Upper lobe of right lung (tissue), 1 donor: ENCODE measurements at regions of chr2 and their contacts with region 1.

Region 1: DNA sequence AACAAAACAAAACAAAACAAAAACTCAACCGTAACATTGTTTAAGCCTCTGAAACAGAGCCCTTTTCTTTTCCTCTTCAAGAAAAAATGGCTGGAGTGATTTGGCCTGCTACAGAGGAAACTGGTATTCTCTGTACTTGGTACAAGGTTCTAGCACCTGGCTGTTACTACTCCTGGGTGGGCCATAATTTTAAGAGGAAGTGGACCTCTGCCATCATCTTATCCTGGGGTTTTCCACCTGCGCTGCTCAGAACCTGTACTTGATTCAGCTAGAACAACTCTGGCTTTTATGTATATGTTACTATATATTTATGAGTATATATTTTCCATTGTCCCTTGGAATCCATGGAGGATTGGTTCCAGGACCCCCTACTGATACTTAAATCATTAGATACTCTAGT is 22.5 kb downstream of the SRSF7 start:
- DNase-seq: no peak
- ATAC-seq: no peak
- H3K4me3 ChIP-seq: no peak overlapping the region
- H3K27ac ChIP-seq: no peak overlapping the region
- H3K4me1 ChIP-seq: no peaks in the 10 kb centered on the region
- H3K27me3 ChIP-seq: no peaks in the 10 kb centered on the region
- CTCF ChIP-seq: no peak

Region 2: GRCh38 chr2:38164881-38165280 is 563.8 kb before region 1 on chr2:
- intact Hi-C with region 1: no loop called
- DNase-seq: no peak
- ATAC-seq: no peak
- H3K4me3 ChIP-seq: no peak overlapping the region
- H3K27ac ChIP-seq: no peak overlapping the region
- H3K4me1 ChIP-seq: peaks cover 21% of the 10 kb centered on the region
- H3K27me3 ChIP-seq: no peaks in the 10 kb centered on the region
- CTCF ChIP-seq: no peak

Region 3: DNA sequence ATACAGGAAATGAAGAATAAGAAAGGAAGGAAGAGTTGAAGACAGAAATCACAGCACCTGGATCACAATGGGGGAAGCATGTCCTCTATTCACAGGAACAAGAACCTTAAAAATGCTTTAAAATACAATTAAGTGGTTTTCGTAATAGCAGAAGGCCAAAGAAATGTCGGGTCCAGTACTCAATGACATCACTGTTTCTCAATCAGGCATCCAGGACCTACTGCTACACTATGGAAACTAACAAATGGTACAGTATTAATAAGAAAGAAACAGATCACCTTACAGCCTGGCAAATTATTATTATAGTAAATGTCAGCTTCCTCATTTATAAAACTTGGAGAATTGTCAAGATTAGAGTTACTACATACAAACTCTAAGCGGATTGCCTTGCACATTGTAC is 141.8 kb before region 1 on chr2:
- intact Hi-C with region 1: loop called (anchors 5 kb)
- DNase-seq: no peak
- ATAC-seq: peak; percentile 41
- H3K4me3 ChIP-seq: no peak overlapping the region
- H3K27ac ChIP-seq: no peak overlapping the region
- H3K4me1 ChIP-seq: peaks cover 14% of the 10 kb centered on the region
- H3K27me3 ChIP-seq: no peaks in the 10 kb centered on the region
- CTCF ChIP-seq: no peak